PC-3 (cell line): ENCODE measurements at regions of chr1 and their contacts with region 1.

Region 1: DNA sequence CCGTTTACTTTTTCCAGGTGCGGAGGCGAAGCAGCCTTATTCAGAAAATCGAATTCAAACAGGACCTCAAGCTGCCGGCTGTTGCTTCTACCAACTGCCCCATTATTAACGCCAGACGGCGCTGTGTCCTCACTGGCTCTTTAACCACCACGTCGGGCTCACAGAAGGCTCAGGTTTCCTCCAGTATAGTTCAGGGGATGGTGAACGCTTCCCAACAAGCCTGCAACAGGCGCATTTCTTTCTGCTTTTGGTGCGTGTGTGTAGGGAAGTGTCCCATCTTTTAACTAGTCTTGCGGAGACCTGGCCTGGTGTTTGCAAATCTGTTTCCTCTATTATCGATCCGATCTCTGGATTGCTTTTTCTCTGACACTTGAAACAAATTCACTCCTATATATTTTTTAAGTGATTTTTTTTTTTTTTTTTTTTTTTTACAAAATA is 791 bp upstream of the STUM start:
- DNase-seq: peak; percentile 99
- ATAC-seq: peak; percentile 93
- H3K4me3 ChIP-seq: no peak overlapping the region
- H3K27ac ChIP-seq: no peak overlapping the region
- H3K4me1 ChIP-seq: peaks cover 18% of the 10 kb centered on the region
- H3K27me3 ChIP-seq: peaks cover 42% of the 10 kb centered on the region
- CTCF ChIP-seq: peak; percentile 99

Region 2: DNA sequence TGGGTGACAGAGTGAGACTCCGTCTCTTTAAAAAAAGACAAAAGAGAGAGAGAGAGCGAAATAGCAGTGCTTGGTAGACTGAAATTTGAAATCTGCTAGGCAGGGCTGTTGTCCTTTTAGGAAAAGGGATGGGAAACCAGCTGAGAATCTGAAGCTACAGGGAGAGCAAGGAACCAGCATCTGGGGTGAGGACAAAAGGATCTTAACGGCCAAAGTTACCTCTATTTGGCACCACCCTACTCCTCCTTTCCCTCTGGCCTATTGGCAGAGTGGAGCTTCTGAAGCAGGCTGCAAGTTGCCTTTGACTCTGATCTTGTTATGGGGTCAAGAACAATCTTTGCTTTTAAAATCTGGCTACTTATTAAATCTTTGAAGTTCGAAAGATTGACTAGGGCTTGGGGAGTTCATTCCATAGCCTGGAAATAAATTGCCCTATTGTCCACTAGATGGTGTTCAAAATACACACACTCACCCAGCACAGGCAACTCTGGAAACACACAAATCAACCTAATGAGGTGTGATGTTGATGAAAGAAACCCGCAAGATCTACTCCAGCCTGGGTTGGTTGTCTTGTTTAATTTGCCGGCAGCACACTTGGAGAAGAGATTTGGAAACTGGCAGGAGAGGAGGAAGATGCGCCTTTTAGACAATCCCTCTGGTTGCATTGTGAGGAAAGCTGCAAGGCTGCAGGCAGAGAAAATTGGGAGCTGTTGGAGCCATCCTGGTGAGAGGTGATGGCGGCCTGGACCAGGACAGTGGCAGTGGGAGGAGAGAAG is 123.4 kb before region 1 on chr1:
- CTCF ChIA-PET with region 1: interaction called, 22 read pairs
- POLR2A ChIA-PET with region 1: no interaction called
- intact Hi-C with region 1: loop called (anchors 1 kb)
- DNase-seq: peak; percentile 71
- ATAC-seq: peak; percentile 95
- H3K4me3 ChIP-seq: no peak overlapping the region
- H3K27ac ChIP-seq: no peak overlapping the region
- H3K4me1 ChIP-seq: peaks cover 5% of the 10 kb centered on the region; the same call in 1 of the 2 replicates
- H3K27me3 ChIP-seq: 0 out of 2 replicates have a peak, but pooled peaks cover 3% of the 10 kb centered on the region
- CTCF ChIP-seq: peak; percentile 98

Region 3: GRCh38 chr1:226438007-226438406 is 109.8 kb before region 1 on chr1:
- CTCF ChIA-PET with region 1: interaction called, 5 read pairs
- POLR2A ChIA-PET with region 1: no interaction called
- intact Hi-C with region 1: loop called (anchors 5 kb)
- DNase-seq: peak; percentile 70
- ATAC-seq: peak; percentile 43; the same call in 1 of the 2 replicates
- H3K4me3 ChIP-seq: no peak overlapping the region
- H3K27ac ChIP-seq: no peak overlapping the region
- H3K4me1 ChIP-seq: peaks cover 1% of the 10 kb centered on the region; the same call in 1 of the 2 replicates
- H3K27me3 ChIP-seq: peaks cover 23% of the 10 kb centered on the region; the same call in 1 of the 2 replicates
- CTCF ChIP-seq: peak; percentile 60

Region 4: DNA sequence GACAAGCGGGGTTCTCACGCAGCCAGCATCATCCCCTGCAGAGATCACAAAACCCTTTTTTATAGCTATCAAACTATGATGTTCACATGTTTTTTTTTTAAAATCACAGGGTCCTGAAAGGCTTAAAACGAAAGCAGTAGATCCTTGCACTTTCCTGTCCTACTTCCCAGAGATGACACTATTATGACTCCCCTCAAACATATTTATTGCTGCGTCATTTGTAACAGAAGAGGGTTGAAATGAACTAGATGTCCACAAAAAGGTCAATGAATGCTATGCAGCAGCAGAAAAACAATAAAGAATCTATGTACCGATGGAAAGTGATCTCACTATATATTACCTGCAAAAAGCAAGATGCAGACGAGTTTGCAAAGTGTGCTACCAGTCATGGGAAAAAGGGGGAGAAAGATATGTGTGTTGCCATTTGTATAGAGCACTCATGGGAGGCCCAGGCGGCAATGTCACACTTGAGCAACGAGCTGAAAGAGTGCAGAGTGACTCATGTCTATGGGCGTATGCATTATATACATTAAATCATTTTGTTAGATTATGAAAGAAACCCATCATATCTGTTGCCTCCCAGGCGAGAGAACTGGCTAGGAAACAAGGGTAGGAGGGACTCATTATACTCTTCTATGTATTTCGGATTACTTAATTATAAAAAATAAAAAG is 71.0 kb before region 1 on chr1:
- CTCF ChIA-PET with region 1: interaction called, 6 read pairs
- POLR2A ChIA-PET with region 1: no interaction called
- intact Hi-C with region 1: loop called (anchors 2 kb)
- DNase-seq: peak; percentile 96
- ATAC-seq: peak; percentile 75
- H3K4me3 ChIP-seq: peak overlapping the region; percentile 5; the same call in 1 of the 2 replicates
- H3K27ac ChIP-seq: peak overlapping the region; percentile 85
- H3K4me1 ChIP-seq: peaks cover 51% of the 10 kb centered on the region
- H3K27me3 ChIP-seq: no peaks in the 10 kb centered on the region
- CTCF ChIP-seq: peak; percentile 44; the same call in 1 of the 2 replicates

Region 5: DNA sequence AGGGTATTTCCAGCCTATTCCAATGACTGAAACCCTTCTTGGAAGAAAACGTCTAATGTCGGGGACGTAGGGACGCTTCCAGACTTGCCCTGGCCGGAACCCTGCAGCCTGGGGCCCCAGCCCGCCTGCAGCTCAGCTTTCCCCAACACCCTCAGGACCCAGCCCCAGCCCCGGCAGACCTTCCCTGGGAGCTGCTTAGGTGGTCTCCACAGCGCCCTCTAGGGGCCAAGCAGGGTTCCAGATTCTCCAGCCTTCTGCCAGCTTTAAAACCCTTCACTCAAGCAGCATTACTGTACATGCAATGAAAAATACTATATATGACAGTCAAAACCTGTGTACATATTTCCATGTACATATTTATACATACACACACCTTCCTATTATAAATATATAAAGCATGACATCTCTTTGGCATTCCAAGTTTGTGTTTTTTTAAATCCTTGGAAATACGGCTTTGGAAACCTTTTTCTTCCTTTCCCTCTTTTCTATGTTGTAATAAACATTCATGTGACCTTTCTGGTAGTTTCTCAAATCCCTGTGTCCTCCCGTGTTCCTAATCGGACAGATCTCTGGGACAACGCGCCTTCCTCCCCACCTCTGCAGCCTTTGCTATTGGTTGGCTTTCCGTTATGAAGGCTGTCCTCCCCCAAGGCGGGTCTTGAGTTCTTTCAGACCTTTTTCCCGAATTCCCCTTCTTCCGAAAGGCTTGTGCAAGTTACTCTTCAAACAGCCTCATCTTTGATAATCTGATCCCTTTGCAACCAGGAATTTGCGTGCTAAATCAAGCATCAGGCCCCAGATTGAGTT is 61.1 kb after region 1 on chr1:
- CTCF ChIA-PET with region 1: interaction called, 12 read pairs
- POLR2A ChIA-PET with region 1: no interaction called
- intact Hi-C with region 1: loop called (anchors 1 kb)
- DNase-seq: peak; percentile 86
- ATAC-seq: peak; percentile 83
- H3K4me3 ChIP-seq: no peak overlapping the region
- H3K27ac ChIP-seq: no peak overlapping the region
- H3K4me1 ChIP-seq: no peaks in the 10 kb centered on the region
- H3K27me3 ChIP-seq: no peaks in the 10 kb centered on the region
- CTCF ChIP-seq: peak; percentile 99

Region 6: DNA sequence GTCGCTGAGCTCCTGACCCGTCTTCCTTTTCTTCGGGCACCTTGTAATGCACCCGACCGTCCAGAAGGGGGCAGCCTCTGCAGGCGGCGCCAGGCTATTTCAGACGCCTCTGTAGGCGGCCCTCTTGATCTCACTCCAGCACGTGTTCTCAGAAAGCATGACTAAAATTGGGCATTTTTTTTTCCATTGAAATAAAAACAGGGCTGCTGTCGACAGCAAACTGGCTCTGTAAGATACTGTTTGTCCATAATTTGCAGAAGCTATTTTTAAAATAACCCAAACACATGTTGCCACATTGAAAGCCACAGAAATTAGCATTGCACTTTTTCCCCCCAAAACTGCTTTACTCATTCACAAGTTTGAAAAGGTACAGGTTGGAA is 78.8 kb after region 1 on chr1:
- CTCF ChIA-PET with region 1: interaction called, 15 read pairs
- POLR2A ChIA-PET with region 1: no interaction called
- intact Hi-C with region 1: no loop called
- DNase-seq: peak; percentile 88
- ATAC-seq: peak; percentile 79
- H3K4me3 ChIP-seq: no peak overlapping the region
- H3K27ac ChIP-seq: no peak overlapping the region
- H3K4me1 ChIP-seq: peaks cover 13% of the 10 kb centered on the region
- H3K27me3 ChIP-seq: no peaks in the 10 kb centered on the region
- CTCF ChIP-seq: peak; percentile 100

Region 7: DNA sequence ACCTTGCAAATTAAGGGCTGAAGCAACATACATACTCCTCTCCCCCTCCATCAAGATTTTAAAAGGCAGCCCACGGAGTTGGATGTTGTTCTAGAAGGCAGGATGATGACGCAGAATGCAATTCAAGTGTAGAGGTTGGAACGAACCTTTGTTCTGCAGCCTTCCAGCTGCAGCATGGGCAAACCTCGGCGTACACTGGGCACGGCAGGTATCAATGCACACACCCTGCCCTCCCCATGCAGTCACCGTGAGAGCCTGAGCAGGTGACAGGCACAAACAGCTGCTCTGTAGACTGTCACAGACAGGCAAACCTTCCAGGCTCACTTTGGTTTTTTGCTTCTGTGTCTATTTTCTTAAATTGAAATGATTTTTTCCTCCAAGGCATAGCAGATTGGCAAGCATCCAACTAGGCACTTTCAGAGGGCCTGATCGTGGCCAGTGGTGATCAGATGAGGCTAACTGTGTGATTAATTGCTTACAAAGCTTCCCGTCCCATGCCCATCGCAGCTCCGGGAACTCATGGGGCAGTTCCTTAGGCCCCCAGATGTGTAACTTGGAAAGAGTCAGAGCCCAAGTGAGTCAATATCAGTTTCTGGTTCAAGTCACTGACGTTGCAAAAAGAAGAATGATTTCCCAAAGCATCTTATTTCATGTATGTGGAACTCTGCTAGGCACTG is 109.0 kb after region 1 on chr1:
- CTCF ChIA-PET with region 1: no interaction called
- POLR2A ChIA-PET with region 1: no interaction called
- intact Hi-C with region 1: no loop called
- DNase-seq: peak; percentile 66
- ATAC-seq: peak; percentile 51
- H3K4me3 ChIP-seq: no peak overlapping the region
- H3K27ac ChIP-seq: 0 out of 2 replicates have a peak overlapping the region, but pooled peaks have one; percentile 13
- H3K4me1 ChIP-seq: peaks cover 12% of the 10 kb centered on the region
- H3K27me3 ChIP-seq: no peaks in the 10 kb centered on the region
- CTCF ChIP-seq: no peak

Region 8: DNA sequence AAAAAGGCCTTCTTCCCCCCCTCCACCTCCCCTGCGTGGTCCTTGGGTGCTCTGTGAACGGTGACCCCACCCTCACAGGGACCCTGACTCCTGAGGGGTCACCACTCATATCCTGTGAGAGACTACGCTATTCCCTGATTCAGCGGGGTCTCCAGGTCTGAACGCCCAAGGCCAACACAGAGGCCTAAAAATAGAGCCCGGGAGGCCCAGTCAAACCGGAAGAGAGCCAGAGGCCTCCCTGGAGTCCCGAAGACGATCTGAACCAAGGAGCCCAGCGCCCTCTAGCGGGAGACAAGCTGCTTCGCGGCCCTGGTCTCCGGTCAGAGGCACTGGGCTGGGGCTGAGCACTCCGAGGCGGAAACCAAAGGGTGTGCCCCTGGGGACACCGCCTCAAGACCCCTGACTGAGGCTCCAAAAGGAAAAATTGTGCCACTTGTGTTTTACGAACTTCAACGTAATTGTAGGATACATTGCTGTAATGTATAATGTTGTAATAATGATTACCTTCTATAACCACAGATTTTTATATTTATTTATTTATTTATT is 280.3 kb after region 1 on chr1:
- CTCF ChIA-PET with region 1: no interaction called
- POLR2A ChIA-PET with region 1: no interaction called
- intact Hi-C with region 1: loop called (anchors 5 kb)
- DNase-seq: peak; percentile 99
- ATAC-seq: peak; percentile 100
- H3K4me3 ChIP-seq: no peak overlapping the region
- H3K27ac ChIP-seq: peak overlapping the region; percentile 3; the same call in 1 of the 2 replicates
- H3K4me1 ChIP-seq: peaks cover 15% of the 10 kb centered on the region
- H3K27me3 ChIP-seq: no peaks in the 10 kb centered on the region
- CTCF ChIP-seq: peak; percentile 99